ENCODE measurements at regions of chr3 and their contacts with region 1.

Region 1: GRCh38 chr3:78659386-78659987 is 1108.3 kb downstream of the ROBO1 start:
- DNase-seq: no peak
- H3K4me3 ChIP-seq: no peak overlapping the region
- H3K27ac ChIP-seq: no peak overlapping the region
- H3K4me1 ChIP-seq: no peaks in the 10 kb centered on the region
- H3K27me3 ChIP-seq: no peaks in the 10 kb centered on the region
- CTCF ChIP-seq: peak; percentile 44 to 58 (median 58)
- POLR2A ChIP-seq: no peak

Region 2: GRCh38 chr3:79032686-79033318 is 373.3 kb after region 1 on chr3:
- intact Hi-C with region 1: loop called (anchors 10 kb)
- DNase-seq: no peak
- H3K4me3 ChIP-seq: no peak overlapping the region
- H3K27ac ChIP-seq: no peak overlapping the region
- H3K4me1 ChIP-seq: no peaks in the 10 kb centered on the region
- H3K27me3 ChIP-seq: no peaks in the 10 kb centered on the region
- CTCF ChIP-seq: peak; percentile 32 to 67 (median 64)
- POLR2A ChIP-seq: no peak

Region 3: DNA sequence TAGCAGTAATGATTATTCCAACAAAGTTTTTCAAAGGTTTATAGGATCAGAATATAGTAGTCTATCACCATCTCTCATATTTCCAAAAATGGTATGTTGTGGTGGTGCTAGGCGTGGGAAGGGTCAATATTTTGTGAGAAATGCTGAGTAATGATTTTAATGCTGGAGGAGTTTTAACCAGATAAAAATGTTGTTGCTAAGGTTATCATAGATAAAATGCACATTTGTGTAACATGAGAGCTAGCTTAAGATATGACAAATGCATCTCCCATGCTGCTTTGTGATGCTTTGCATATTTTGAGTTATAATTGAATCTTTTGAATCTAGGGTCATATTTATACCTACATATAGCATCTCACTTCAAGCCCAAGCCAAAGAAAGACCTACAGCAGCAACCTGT is 1212.2 kb after region 1 on chr3:
- intact Hi-C with region 1: no loop called
- DNase-seq: no peak
- H3K4me3 ChIP-seq: no peak overlapping the region
- H3K27ac ChIP-seq: no peak overlapping the region
- H3K4me1 ChIP-seq: no peaks in the 10 kb centered on the region
- H3K27me3 ChIP-seq: no peaks in the 10 kb centered on the region
- CTCF ChIP-seq: no peak
- POLR2A ChIP-seq: no peak

Measured in breast epithelium (tissue), 4 donors.